SK-N-SH (cell line): ENCODE measurements at regions of chr11 and their contacts with region 1.

Region 1: GRCh38 chr11:126607374-126607773 is 251.9 kb downstream of the ST3GAL4 start:
- DNase-seq: peak; percentile 83
- H3K4me3 ChIP-seq: no peak overlapping the region
- H3K27ac ChIP-seq: no peak overlapping the region
- H3K4me1 ChIP-seq: peaks cover 0 to 30% of the 10 kb centered on the region in 2 experiments; a peak in 2 of 4 replicates
- H3K27me3 ChIP-seq: no peaks in the 10 kb centered on the region
- CTCF ChIP-seq: peak; percentile 83
- EP300 ChIP-seq: no peak
- RAD21 ChIP-seq: peak; percentile 91

Region 2: DNA sequence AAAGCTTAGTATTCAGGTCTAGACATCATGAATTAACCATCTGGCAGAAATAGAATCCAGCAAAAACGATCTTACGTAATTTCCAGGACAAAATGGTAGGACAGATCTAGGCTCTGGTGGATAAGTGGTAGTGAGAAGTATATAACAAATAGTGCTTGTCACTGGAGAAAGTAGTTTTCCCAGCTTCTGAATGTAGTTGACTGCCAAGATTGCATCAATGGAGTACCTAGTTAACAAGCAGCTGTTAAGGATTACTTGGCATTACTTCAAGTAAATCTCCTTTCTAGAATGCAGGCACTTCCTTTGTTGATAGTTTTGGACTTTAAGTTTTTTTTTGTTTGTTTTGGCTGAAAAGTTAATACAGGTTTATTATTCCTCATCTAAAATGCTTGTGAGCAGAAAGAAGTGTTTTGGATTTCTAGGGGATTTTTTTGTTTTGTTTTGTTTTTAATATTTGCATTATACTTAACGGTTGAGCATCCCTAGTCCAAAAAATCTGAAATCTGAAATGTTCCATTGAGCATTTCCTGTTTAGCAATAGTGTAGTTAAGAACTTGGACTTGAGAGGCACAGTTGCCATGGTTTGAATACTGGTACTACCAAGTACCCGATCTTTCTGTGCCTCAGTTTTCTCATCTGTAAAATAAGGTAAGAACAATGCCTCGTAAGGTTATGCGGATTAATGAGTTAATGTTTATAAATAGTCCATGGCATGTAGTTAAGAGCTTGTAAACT is 375.5 kb before region 1 on chr11:
- CTCF ChIA-PET with region 1: no interaction called
- POLR2A ChIA-PET with region 1: no interaction called
- DNase-seq: no peak
- H3K4me3 ChIP-seq: no peak overlapping the region
- H3K27ac ChIP-seq: no peak overlapping the region
- H3K4me1 ChIP-seq: peaks cover 2 to 29% of the 10 kb centered on the region in 2 experiments; a peak in 3 of 4 replicates
- H3K27me3 ChIP-seq: no peaks in the 10 kb centered on the region
- CTCF ChIP-seq: no peak
- EP300 ChIP-seq: no peak
- RAD21 ChIP-seq: no peak

Region 3: GRCh38 chr11:126514061-126514693 is 93.2 kb before region 1 on chr11:
- CTCF ChIA-PET with region 1: no interaction called
- POLR2A ChIA-PET with region 1: no interaction called
- DNase-seq: peak; percentile 73
- H3K4me3 ChIP-seq: no peak overlapping the region
- H3K27ac ChIP-seq: peak overlapping the region in 1 of 2 experiments; percentile 94; a peak in 2 of 4 replicates
- H3K4me1 ChIP-seq: peaks cover 0 to 62% of the 10 kb centered on the region in 2 experiments; a peak in 2 of 4 replicates
- H3K27me3 ChIP-seq: no peaks in the 10 kb centered on the region
- CTCF ChIP-seq: no peak
- EP300 ChIP-seq: peak in 1 of 2 experiments; percentile 82; a peak in 2 of 4 replicates
- RAD21 ChIP-seq: no peak

Region 4: DNA sequence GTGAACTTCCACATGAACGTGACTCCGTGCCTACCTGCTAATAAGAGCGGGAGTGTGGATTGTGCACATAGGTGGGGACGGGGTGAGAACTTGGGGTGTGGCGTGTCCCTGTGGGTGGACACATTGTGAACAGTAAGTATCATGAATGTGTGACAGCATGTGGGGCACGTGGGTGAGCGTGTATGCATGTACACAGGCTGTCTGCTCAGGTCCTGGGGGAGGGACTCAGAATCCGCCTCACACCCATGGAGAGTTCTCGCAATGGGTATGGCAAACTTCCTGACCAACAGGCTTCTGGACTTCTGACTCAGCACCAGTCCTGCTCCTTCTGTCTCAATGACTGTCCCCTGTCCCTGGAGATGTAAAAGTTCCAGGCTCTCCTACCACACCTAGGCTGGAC is 28.9 kb before region 1 on chr11:
- CTCF ChIA-PET with region 1: interaction called, 10 read pairs
- POLR2A ChIA-PET with region 1: no interaction called
- DNase-seq: no peak
- H3K4me3 ChIP-seq: no peak overlapping the region
- H3K27ac ChIP-seq: no peak overlapping the region
- H3K4me1 ChIP-seq: peaks cover 4 to 12% of the 10 kb centered on the region in 2 experiments; a peak in 1 of 4 replicates
- H3K27me3 ChIP-seq: no peaks in the 10 kb centered on the region
- CTCF ChIP-seq: no peak
- EP300 ChIP-seq: no peak
- RAD21 ChIP-seq: no peak

Region 5: DNA sequence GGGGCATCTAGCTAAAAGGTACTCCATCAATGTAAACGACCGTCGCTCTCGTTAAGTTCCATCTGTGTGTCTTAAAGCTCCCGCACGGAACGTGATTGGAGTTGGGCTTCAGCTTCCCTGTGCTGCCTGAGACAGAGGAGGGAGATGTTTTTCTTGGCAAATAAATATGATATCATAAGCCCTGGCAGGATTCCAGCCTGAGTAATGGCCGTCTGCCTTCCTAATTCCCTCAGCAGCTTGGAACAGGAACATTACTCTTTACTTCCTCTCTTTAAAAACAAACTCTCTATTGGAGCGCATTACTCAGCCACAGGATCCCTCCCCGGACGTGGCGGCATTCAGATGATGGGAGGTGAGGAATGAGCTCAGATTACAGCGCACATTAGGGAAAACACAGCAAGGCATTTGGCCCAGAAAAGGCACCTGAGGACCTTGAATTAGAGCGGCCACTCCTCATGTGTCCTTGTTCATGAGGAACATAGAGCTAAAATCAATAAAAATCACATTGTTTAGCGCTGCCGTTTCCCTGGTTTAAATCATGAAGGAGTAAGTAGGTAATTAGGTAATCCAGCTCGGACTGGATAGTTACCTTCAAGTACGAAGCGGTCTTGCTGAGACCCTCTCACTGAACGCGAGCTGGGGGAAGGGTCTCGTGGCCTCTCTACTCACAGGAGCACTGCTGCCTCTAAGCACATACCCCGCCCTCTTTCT is 21.4 kb before region 1 on chr11:
- CTCF ChIA-PET with region 1: interaction called, 77 read pairs
- POLR2A ChIA-PET with region 1: no interaction called
- DNase-seq: peak; percentile 75
- H3K4me3 ChIP-seq: no peak overlapping the region; a peak in 1 of 4 replicates
- H3K27ac ChIP-seq: peak overlapping the region; percentile 54 to 84
- H3K4me1 ChIP-seq: peaks cover 14 to 44% of the 10 kb centered on the region in 2 experiments
- H3K27me3 ChIP-seq: no peaks in the 10 kb centered on the region
- CTCF ChIP-seq: no peak
- EP300 ChIP-seq: peak in 1 of 2 experiments; percentile 47; a peak in 1 of 4 replicates
- RAD21 ChIP-seq: no peak

Region 6: DNA sequence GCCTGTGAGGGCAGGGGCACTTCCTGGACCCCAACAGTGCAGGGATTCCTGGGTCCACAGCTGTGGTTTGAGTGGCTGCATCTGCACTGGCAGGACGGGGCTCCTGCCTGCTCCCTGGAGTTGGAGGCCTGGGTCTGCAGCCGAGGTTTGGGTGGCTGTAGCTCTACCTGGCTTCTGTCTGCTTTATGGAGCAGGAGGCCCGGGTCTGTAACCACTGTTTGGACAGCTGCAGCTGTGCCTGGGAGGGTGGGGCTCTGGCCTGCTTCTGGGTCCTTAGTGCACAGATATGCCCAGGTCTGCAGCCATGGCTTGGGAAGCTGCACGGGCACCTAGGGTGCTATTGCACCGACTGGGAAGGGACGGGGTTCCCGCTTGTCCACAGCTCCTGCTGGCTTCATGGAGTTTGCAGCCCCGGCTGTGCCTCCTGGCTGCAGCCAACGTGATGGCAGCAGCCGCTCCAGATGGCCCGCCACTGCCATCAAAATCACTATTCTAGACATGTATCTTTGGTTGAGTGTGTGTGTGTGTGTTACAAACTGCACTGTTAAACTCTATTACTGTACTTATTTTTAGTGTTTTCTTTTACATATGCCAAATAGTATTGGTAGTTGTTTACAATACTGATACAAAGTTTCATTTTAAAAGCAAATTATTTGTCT is 805.5 kb after region 1 on chr11:
- CTCF ChIA-PET with region 1: no interaction called
- POLR2A ChIA-PET with region 1: no interaction called
- DNase-seq: no peak
- H3K4me3 ChIP-seq: no peak overlapping the region
- H3K27ac ChIP-seq: no peak overlapping the region
- H3K4me1 ChIP-seq: no peaks in the 10 kb centered on the region
- H3K27me3 ChIP-seq: no peaks in the 10 kb centered on the region
- CTCF ChIP-seq: no peak
- EP300 ChIP-seq: no peak
- RAD21 ChIP-seq: no peak